ENCODE measurements at regions of chr4 and their contacts with region 1.

Region 1: GRCh38 chr4:17576932-17577665 is at the start of gene LAP3:
- DNase-seq: peak; percentile 100
- total RNA-seq, gene LAP3: 58.9 TPM

Region 2: DNA sequence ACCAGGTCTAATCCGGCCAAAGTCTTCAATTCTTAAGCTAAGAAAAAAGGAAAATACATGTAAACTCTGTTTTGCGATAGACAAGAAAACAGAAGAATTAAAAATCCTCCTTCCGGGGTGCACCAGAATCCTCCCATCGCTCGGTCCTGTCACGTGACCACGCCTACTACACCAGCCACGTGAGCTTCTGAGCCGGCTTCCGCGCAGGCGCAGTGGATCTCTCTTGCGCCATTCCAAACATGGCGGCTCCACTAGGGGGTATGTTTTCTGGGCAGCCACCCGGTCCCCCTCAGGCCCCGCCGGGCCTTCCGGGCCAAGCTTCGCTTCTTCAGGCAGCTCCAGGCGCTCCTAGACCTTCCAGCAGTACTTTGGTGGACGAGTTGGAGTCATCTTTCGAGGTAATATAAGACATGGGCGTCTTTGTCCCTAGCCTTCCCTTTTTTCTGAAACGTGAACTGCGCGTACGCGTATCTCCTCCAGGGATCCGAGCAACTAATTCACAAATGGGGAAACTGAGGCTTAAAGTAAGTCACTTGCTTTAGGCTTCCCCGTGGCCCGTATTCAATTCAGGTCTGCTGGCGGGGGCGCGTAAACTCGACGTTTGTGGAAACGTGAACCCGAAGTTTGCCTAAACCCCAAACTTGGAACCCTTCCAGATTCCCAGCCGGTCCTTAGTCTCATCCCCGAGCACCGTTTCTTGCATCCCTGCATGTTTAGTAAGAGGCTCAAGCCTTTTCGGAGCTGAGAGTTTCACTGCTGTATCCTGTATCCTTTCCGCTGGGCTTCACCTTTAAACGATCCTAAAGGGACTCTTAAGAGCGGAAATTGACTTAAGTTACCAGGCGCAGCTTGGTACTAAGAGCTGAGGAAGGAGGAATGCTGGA is 37.6 kb after region 1 on chr4 and contains the start of gene MED28:
- intact Hi-C with region 1: loop called (anchors 1 kb)
- DNase-seq: peak; percentile 97
- total RNA-seq, gene MED28: 21.7 TPM

Region 3: DNA sequence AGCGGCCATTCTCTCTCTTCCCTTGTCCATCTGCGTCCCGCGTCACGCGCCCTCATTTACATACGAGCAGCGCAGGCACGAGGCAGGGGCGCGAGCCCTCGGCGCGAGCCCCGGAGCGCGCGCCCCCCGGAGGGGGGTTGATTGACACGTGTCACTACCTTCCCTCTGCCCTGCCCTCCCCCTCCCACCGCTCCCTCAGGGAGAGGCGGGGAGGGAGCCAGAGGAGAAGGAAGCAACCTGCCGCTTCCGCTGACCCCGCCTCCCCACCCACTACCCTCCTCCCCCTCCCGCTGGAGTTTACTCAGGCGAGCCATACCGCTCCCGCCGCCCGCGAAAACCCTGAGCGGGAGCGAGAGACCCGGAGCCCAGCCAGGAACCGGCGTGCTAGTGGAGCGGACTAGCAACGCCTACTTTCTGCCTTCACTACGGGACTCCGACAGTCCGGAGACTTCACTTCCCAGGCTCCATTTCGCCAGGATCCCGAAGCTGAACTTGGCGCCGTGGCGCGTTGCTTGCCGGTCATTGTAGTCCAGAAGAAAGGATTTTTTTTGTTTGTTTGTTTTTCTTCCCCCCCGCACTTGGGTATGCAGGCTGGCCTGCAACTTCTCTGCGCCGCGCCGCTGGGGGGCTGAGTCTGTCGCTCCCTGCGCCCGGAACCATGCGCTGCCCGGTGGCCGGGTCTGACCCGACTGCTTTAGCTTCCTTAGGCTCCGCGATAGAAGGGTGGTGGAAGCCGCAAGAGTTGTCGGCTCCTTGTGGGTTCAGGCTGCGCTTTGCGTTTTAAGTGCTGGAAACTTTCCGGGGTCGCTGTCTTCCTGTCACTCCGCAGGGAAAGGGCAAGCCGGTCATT is 444.8 kb after region 1 on chr4 and contains the start of gene LCORL:
- intact Hi-C with region 1: loop called (anchors 2 kb)
- DNase-seq: peak; percentile 95
- total RNA-seq, gene LCORL: 5.5 TPM